ENCODE measurements at regions of chr20 and their contacts with region 1.

Region 1: GRCh38 chr20:21235484-21236445 is 67.4 kb upstream of the XRN2 start:
- DNase-seq: peak; percentile 78
- ATAC-seq: peak; percentile 80
- H3K4me3 Mint-ChIP-seq: no peak overlapping the region
- H3K27ac Mint-ChIP-seq: no peak overlapping the region
- H3K4me1 Mint-ChIP-seq: peaks cover 5% of the 10 kb centered on the region
- H3K27me3 Mint-ChIP-seq: no peaks in the 10 kb centered on the region

Region 2: GRCh38 chr20:21125849-21126580 is 109.8 kb before region 1 on chr20 and contains the start of gene KIZ:
- CTCF ChIA-PET with region 1: interaction called, 16 read pairs
- POLR2A ChIA-PET with region 1: no interaction called
- DNase-seq: peak; percentile 97
- ATAC-seq: peak; percentile 99
- H3K4me3 Mint-ChIP-seq: peak within 1 kb of the TSS; percentile 85
- H3K27ac Mint-ChIP-seq: peak within 1 kb of the TSS; percentile 86
- H3K4me1 Mint-ChIP-seq: peaks cover 22% of the 10 kb centered on the region
- H3K27me3 Mint-ChIP-seq: peaks cover 7% of the 10 kb centered on the region
- total RNA-seq, gene KIZ: 16.2 to 19.9 TPM

Region 3: GRCh38 chr20:21159658-21160380 is 75.9 kb before region 1 on chr20:
- CTCF ChIA-PET with region 1: no interaction called
- POLR2A ChIA-PET with region 1: no interaction called
- DNase-seq: no peak
- ATAC-seq: no peak
- H3K4me3 Mint-ChIP-seq: no peak overlapping the region
- H3K27ac Mint-ChIP-seq: no peak overlapping the region
- H3K4me1 Mint-ChIP-seq: peaks cover 6% of the 10 kb centered on the region
- H3K27me3 Mint-ChIP-seq: no peaks in the 10 kb centered on the region

Region 4: DNA sequence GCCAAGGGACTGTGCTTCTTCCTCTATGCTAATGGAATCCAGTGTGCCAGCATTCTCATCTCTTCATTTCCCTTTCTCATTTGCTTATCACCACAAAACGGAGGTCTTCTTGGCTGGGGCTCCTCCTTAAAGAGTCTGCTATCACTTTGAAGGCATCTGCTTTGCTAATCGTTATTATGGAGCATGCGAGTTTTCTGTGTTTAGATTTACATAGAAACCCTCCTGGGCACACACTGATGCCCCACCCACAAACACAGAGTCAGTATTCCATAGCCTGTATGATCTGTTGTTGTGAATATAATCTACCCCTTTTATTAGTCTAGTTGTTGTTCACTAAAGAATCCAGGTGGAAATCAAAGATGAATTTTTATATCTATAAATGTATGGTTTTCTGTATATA is 16.1 kb before region 1 on chr20:
- CTCF ChIA-PET with region 1: interaction called, 25 read pairs
- POLR2A ChIA-PET with region 1: no interaction called
- DNase-seq: no peak
- ATAC-seq: no peak
- H3K4me3 Mint-ChIP-seq: no peak overlapping the region
- H3K27ac Mint-ChIP-seq: no peak overlapping the region
- H3K4me1 Mint-ChIP-seq: no peaks in the 10 kb centered on the region
- H3K27me3 Mint-ChIP-seq: no peaks in the 10 kb centered on the region

Region 5: GRCh38 chr20:21251278-21251677 is 15.5 kb after region 1 on chr20:
- CTCF ChIA-PET with region 1: interaction called, 11 read pairs
- POLR2A ChIA-PET with region 1: no interaction called
- DNase-seq: no peak
- ATAC-seq: no peak
- H3K4me3 Mint-ChIP-seq: no peak overlapping the region
- H3K27ac Mint-ChIP-seq: no peak overlapping the region
- H3K4me1 Mint-ChIP-seq: no peaks in the 10 kb centered on the region
- H3K27me3 Mint-ChIP-seq: no peaks in the 10 kb centered on the region

Region 6: DNA sequence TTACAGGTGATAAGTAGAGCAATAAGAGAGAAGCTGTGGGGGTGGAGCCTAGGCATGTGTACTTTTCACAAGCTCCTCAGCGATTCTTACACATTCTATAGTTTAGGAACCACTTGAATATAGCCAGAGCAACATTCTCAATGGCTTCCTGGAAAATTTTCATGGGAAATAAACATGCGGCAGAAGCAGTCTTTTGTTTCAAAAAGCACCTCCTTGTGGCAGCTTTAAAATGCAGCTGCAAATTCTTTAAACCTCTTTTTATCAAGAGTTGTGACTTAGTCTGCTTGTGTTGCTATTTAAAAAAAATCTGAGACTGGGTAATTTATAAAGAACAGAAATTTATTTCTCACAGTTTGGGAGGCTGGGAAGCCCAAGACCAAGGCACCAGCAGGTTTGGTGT is 254.3 kb after region 1 on chr20:
- CTCF ChIA-PET with region 1: interaction called, 26 read pairs
- POLR2A ChIA-PET with region 1: no interaction called
- DNase-seq: no peak
- ATAC-seq: no peak
- H3K4me3 Mint-ChIP-seq: no peak overlapping the region
- H3K27ac Mint-ChIP-seq: no peak overlapping the region
- H3K4me1 Mint-ChIP-seq: no peaks in the 10 kb centered on the region
- H3K27me3 Mint-ChIP-seq: peaks cover 24% of the 10 kb centered on the region

Region 7: GRCh38 chr20:21505161-21505809 is 269.5 kb after region 1 on chr20:
- CTCF ChIA-PET with region 1: interaction called, 205 read pairs
- POLR2A ChIA-PET with region 1: no interaction called
- DNase-seq: peak; percentile 81
- ATAC-seq: peak; percentile 57
- H3K4me3 Mint-ChIP-seq: peak overlapping the region; percentile 25
- H3K27ac Mint-ChIP-seq: no peak overlapping the region
- H3K4me1 Mint-ChIP-seq: peaks cover 28% of the 10 kb centered on the region
- H3K27me3 Mint-ChIP-seq: peaks cover 41% of the 10 kb centered on the region